Ascending aorta (tissue), 2 donors: ENCODE measurements at regions of chr17 and their contacts with region 1.

Region 1: DNA sequence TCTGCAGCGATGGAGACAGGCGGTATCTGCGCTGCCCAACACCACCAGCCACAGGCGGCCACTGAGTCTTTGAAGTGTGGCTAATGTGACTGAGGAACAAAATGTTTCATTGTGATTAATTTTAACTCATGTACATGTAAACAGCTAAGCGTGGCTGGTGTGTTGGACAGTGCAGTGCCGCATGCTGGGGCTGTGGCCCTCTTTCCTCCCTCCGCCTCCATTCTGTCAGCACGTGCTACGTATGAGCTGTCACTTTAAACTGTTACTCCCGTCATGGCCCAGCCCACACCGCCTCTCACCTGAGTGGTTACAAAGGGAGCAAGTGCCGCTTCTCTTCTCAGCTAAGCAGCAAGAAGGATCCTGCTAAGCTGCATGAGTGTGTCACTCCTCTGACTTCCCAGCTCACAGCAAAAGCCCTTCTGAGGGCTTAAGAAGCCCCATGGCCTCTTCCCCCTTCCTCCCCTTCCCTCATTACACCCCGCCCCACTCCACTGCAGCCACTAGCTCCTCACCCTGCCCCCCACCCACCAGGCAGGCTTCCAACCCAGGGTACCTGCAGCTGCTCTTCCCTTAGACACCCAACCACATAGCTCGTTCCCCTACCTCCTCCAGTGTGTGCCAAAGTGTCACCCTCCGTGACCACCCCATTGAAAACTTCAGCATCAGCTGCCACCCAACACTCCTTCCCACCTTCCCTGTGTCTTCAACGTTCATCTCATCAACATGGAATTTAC is 15.0 kb downstream of the HASPIN start:
- DNase-seq: no peak
- H3K4me3 ChIP-seq: no peak overlapping the region
- H3K27ac ChIP-seq: no peak overlapping the region
- H3K4me1 ChIP-seq: no peaks in the 10 kb centered on the region
- H3K27me3 ChIP-seq: no peaks in the 10 kb centered on the region
- CTCF ChIP-seq: no peak

Region 2: GRCh38 chr17:3827124-3827773 is 88.5 kb after region 1 on chr17:
- intact Hi-C with region 1: loop called (anchors 5 kb)
- DNase-seq: no peak
- H3K4me3 ChIP-seq: no peak overlapping the region
- H3K27ac ChIP-seq: no peak overlapping the region
- H3K4me1 ChIP-seq: peaks cover 0 to 9% of the 10 kb centered on the region in 2 donors
- H3K27me3 ChIP-seq: no peaks in the 10 kb centered on the region
- CTCF ChIP-seq: peak; percentile 16 to 38 (median 21)